ENCODE measurements at regions of chr12 and their contacts with region 1.

Region 1: GRCh38 chr12:75480469-75480949 is at the start of gene GLIPR1:
- DNase-seq: peak; percentile 42 to 86 (median 65)
- ATAC-seq: peak; percentile 79 to 88 (median 86)
- H3K4me3 ChIP-seq: peak within 1 kb of the TSS; percentile 69 to 71
- H3K4me3 Mint-ChIP-seq: peak within 1 kb of the TSS; percentile 96 to 98 (median 98)
- H3K27ac ChIP-seq: peak within 1 kb of the TSS; percentile 90
- H3K27ac Mint-ChIP-seq: peak within 1 kb of the TSS; percentile 95 to 98
- H3K4me1 ChIP-seq: peaks cover 32 to 46% of the 10 kb centered on the region in 2 experiments
- H3K4me1 Mint-ChIP-seq: peaks cover 78 to 80% (median 80%) of the 10 kb centered on the region in 3 donors
- H3K27me3 ChIP-seq: no peaks in the 10 kb centered on the region
- H3K27me3 Mint-ChIP-seq: no peaks in the 10 kb centered on the region
- total RNA-seq, gene GLIPR1: 42.9 to 102 (median 53.5) TPM

Region 2: DNA sequence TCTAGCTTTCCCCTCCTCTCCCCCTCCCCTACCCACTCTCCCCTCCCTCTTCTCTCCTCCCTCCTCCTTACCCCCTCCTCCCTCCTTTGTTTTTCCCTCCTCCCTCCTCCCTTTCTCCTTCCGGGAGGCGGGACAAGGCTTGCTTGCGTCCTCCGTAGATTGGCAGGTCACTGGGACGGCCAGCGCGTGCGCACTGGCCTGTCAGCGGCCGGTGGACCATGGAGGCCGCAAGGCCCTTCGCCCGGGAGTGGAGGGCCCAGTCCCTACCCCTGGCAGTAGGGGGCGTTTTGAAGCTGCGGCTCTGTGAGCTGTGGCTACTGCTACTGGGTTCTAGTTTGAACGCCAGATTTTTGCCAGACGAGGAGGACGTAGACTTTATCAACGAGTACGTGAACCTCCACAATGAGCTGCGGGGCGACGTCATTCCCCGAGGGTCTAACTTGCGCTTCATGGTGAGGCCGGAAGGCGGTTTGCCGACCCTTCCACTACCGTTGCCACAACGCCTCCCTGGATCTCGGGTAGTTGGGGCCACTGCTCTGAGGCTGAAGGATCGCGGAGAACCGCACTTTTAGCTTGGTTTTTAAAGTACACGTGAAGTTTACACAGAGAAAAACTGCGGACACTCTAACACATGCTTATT is 89.5 kb before region 1 on chr12 and contains the start of gene GLIPR1L2:
- CTCF ChIA-PET with region 1: interaction called, 4 to 63 read pairs
- POLR2A ChIA-PET with region 1: interaction called, 3 to 21 read pairs
- DNase-seq: peak; percentile 66 to 93 (median 78)
- ATAC-seq: peak; percentile 90 to 95 (median 93)
- H3K4me3 ChIP-seq: peak within 1 kb of the TSS; percentile 73 to 74
- H3K4me3 Mint-ChIP-seq: peak within 1 kb of the TSS; percentile 90 to 93 (median 92)
- H3K27ac ChIP-seq: peak within 1 kb of the TSS; percentile 91
- H3K27ac Mint-ChIP-seq: peak within 1 kb of the TSS; percentile 98 to 99
- H3K4me1 ChIP-seq: peaks cover 9 to 12% of the 10 kb centered on the region in 2 experiments
- H3K4me1 Mint-ChIP-seq: peaks cover 47 to 65% (median 48%) of the 10 kb centered on the region in 3 donors
- H3K27me3 ChIP-seq: no peaks in the 10 kb centered on the region
- H3K27me3 Mint-ChIP-seq: no peaks in the 10 kb centered on the region
- total RNA-seq, gene GLIPR1L2: 0.51 to 2.9 (median 0.72) TPM

Region 3: GRCh38 chr12:75457191-75457590 is 23.3 kb before region 1 on chr12:
- CTCF ChIA-PET with region 1: interaction called in 1 of 2 experiments, 6 read pairs
- POLR2A ChIA-PET with region 1: interaction called, 3 to 11 read pairs
- DNase-seq: peak in 1 of 35 experiments; percentile 45
- ATAC-seq: peak in 3 of 4 experiments; percentile 46 to 58 (median 49)
- H3K4me3 ChIP-seq: no peak overlapping the region
- H3K4me3 Mint-ChIP-seq: peak overlapping the region in 1 of 3 donors; percentile 3
- H3K27ac ChIP-seq: peak overlapping the region; percentile 41
- H3K27ac Mint-ChIP-seq: peak overlapping the region; percentile 19 to 72
- H3K4me1 ChIP-seq: peaks cover 11 to 14% of the 10 kb centered on the region in 2 experiments
- H3K4me1 Mint-ChIP-seq: peaks cover 40 to 53% (median 45%) of the 10 kb centered on the region in 3 donors
- H3K27me3 ChIP-seq: no peaks in the 10 kb centered on the region
- H3K27me3 Mint-ChIP-seq: no peaks in the 10 kb centered on the region

Region 4: GRCh38 chr12:75511116-75512048 is 30.9 kb after region 1 on chr12 and contains the start of gene KRR1:
- CTCF ChIA-PET with region 1: interaction called, 33 to 44 read pairs
- POLR2A ChIA-PET with region 1: interaction called, 11 to 12 read pairs
- DNase-seq: peak; percentile 71 to 97 (median 86)
- ATAC-seq: peak; percentile 97 to 99 (median 98)
- H3K4me3 ChIP-seq: peak within 1 kb of the TSS; percentile 86 to 96
- H3K4me3 Mint-ChIP-seq: peak within 1 kb of the TSS; percentile 99
- H3K27ac ChIP-seq: peak within 1 kb of the TSS; percentile 93
- H3K27ac Mint-ChIP-seq: peak within 1 kb of the TSS; percentile 97 to 99
- H3K4me1 ChIP-seq: peaks cover 8 to 10% of the 10 kb centered on the region in 2 experiments
- H3K4me1 Mint-ChIP-seq: peaks cover 31 to 37% (median 32%) of the 10 kb centered on the region in 3 donors
- H3K27me3 ChIP-seq: no peaks in the 10 kb centered on the region
- H3K27me3 Mint-ChIP-seq: no peaks in the 10 kb centered on the region
- total RNA-seq, gene KRR1: 53.7 to 122 (median 66.5) TPM

Region 5: GRCh38 chr12:76064904-76065303 is 584.4 kb after region 1 on chr12:
- CTCF ChIA-PET with region 1: no interaction called
- POLR2A ChIA-PET with region 1: no interaction called
- DNase-seq: no peak
- ATAC-seq: no peak
- H3K4me3 ChIP-seq: no peak overlapping the region
- H3K4me3 Mint-ChIP-seq: no peak overlapping the region
- H3K27ac ChIP-seq: no peak overlapping the region
- H3K27ac Mint-ChIP-seq: no peak overlapping the region
- H3K4me1 ChIP-seq: peaks cover 0 to 2% of the 10 kb centered on the region in 2 experiments
- H3K4me1 Mint-ChIP-seq: peaks cover 42 to 45% (median 44%) of the 10 kb centered on the region in 3 donors
- H3K27me3 ChIP-seq: no peaks in the 10 kb centered on the region
- H3K27me3 Mint-ChIP-seq: no peaks in the 10 kb centered on the region

Region 6: DNA sequence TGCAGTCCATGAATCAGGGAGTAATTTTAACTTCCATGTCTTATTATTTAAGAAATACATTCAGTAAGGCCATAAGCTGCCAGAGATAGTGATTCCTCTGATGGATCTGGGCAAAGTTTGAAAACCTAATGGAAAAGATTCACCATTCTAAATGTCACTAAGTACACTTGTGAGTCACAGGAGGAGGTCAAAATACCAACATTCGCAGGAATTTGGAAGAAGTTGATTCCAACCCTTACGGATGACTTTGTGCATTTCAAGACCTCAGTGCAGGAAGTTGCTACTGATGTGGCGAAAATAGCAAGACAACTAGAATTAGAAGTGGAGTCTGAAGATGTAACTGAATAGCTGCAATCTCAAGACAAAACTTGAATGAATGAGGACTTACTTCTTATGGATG is 1009.2 kb after region 1 on chr12:
- CTCF ChIA-PET with region 1: no interaction called
- POLR2A ChIA-PET with region 1: interaction called in 1 of 2 experiments, 10 read pairs
- DNase-seq: no peak
- ATAC-seq: no peak
- H3K4me3 ChIP-seq: no peak overlapping the region
- H3K4me3 Mint-ChIP-seq: no peak overlapping the region
- H3K27ac ChIP-seq: no peak overlapping the region
- H3K27ac Mint-ChIP-seq: no peak overlapping the region
- H3K4me1 ChIP-seq: peaks cover 0 to 9% of the 10 kb centered on the region in 2 experiments
- H3K4me1 Mint-ChIP-seq: peaks cover 31 to 46% (median 44%) of the 10 kb centered on the region in 3 donors
- H3K27me3 ChIP-seq: no peaks in the 10 kb centered on the region
- H3K27me3 Mint-ChIP-seq: no peaks in the 10 kb centered on the region

Measured in T-cell (primary cell).